ENCODE measurements at regions of chr1 and their contacts with region 1.

Region 1: GRCh38 chr1:9455487-9456234 is 83.6 kb upstream of the SLC25A33 start:
- DNase-seq: peak; percentile 56
- ATAC-seq: peak; percentile 92
- H3K4me3 ChIP-seq: no peak overlapping the region
- H3K27ac ChIP-seq: no peak overlapping the region
- H3K4me1 ChIP-seq: no peaks in the 10 kb centered on the region
- H3K27me3 ChIP-seq: peaks cover 8% of the 10 kb centered on the region
- CTCF ChIP-seq: peak; percentile 89
- POLR2A ChIP-seq: no peak
- RAD21 ChIP-seq: peak; percentile 94

Region 2: GRCh38 chr1:9269078-9269501 is 186.6 kb before region 1 on chr1:
- CTCF ChIA-PET with region 1: interaction called, 6 read pairs
- POLR2A ChIA-PET with region 1: no interaction called
- dilution Hi-C with region 1: no loop called
- in situ Hi-C with region 1: no loop called
- intact Hi-C with region 1: loop called (anchors 1 kb)
- DNase-seq: no peak
- ATAC-seq: no peak
- H3K4me3 ChIP-seq: no peak overlapping the region
- H3K27ac ChIP-seq: no peak overlapping the region
- H3K4me1 ChIP-seq: peaks cover 6% of the 10 kb centered on the region
- H3K27me3 ChIP-seq: no peaks in the 10 kb centered on the region
- CTCF ChIP-seq: no peak
- POLR2A ChIP-seq: no peak
- RAD21 ChIP-seq: no peak

Region 3: GRCh38 chr1:9520411-9520810 is 64.8 kb after region 1 on chr1:
- CTCF ChIA-PET with region 1: no interaction called
- POLR2A ChIA-PET with region 1: no interaction called
- dilution Hi-C with region 1: no loop called
- in situ Hi-C with region 1: no loop called
- intact Hi-C with region 1: no loop called
- DNase-seq: no peak
- ATAC-seq: no peak
- H3K4me3 ChIP-seq: no peak overlapping the region
- H3K27ac ChIP-seq: no peak overlapping the region
- H3K4me1 ChIP-seq: no peaks in the 10 kb centered on the region
- H3K27me3 ChIP-seq: peaks cover 12% of the 10 kb centered on the region
- CTCF ChIP-seq: no peak
- POLR2A ChIP-seq: no peak
- RAD21 ChIP-seq: no peak

Region 4: DNA sequence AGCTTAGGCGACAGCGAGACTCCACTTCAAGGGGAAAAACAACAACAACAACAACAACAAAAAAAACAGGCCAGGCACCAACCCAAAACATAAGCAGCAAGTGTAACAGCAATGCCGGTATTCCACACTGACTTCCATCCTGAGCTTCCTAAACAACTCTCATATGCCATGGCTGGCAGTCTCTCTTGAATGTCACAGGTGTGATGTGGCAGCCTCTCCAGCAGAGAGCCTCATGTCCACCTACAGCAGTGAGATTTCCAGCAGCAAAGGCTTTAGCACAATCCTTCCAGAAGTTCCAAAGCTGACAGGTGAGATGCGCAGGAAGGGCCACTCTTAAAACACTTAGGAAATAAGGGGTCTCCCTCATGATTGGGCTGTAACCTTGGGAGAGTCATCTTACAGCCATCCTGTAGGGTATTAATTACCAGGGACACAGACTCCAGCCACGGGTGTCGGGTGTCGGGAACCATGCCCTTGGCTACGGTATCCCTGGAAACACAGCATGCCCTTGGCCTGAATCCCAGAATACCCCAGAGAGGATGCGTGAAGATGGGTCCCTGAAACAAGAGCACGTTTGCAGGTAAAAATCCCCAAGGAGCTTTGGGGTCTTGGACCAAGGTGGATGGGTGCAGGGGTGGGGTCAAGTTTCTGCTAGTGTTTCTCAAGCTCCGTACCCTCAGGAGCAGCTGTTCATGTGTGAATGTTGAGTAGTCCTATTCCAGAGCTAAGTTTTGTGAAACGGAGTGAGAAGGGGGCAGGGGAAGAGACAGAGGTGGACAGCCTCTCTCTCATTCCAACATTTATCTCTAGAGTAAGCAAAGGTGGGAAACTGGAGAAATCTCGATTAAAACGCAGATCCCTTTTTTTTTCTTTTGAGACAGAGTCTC is 336.7 kb after region 1 on chr1:
- CTCF ChIA-PET with region 1: no interaction called
- POLR2A ChIA-PET with region 1: no interaction called
- dilution Hi-C with region 1: no loop called
- in situ Hi-C with region 1: no loop called
- intact Hi-C with region 1: no loop called
- DNase-seq: peak; percentile 36
- ATAC-seq: peak; percentile 62
- H3K4me3 ChIP-seq: no peak overlapping the region
- H3K27ac ChIP-seq: no peak overlapping the region
- H3K4me1 ChIP-seq: peaks cover 7% of the 10 kb centered on the region; the same call in 1 of the 2 replicates
- H3K27me3 ChIP-seq: no peaks in the 10 kb centered on the region
- CTCF ChIP-seq: no peak
- POLR2A ChIP-seq: no peak
- RAD21 ChIP-seq: no peak

Measured in IMR-90 (cell line).